ENCODE measurements at regions of chr1 and their contacts with region 1.

Region 1: GRCh38 chr1:116556289-116557006 is 14.4 kb downstream of the CD58 start:
- DNase-seq: peak; percentile 66 to 90
- ATAC-seq: peak; percentile 95

Region 2: DNA sequence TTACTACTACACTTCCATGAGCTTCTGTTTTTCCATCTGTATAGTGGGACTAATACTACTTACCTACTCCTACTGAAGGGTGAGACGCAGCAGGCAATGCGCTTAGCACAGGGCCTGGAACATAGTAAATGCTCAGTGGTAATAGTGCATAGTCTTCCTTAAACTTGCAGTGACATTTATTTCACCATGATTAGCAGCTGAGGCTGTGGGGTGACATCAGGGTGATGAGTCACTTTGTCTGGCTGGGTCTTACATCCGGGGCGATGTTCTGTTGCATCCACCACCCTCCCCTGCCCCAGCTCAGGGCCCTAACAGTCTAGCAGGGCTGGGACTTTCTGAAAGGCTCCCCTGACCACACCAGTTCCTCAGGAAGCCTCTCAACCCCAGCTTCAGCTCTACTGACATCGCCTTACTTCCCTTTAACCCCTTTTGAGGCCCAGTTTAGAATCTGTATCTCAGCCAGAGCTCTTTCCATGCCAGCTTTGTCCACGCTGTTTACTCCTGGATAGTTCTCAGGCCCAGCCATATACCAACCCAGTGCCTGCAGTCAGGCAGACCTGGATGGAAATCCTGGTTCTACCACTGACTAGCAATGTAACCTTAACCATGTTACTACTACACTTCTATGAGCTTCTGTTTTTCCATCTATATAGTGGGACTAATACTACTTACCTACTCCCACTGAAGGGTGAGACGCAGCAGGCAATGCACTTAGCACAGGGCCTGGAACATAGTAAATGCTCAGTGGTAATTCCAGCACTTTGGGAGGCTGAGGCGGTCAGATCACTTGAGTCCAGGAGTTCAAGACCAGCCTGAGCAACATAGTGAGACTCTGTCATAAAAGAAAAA is 51.9 kb before region 1 on chr1:
- intact Hi-C with region 1: loop called in 1 of 2 experiments (anchors 5 kb)
- DNase-seq: peak; percentile 60 to 72
- ATAC-seq: peak; percentile 19